Testis (tissue), 5 donors: ENCODE measurements at regions of chr5 and their contacts with region 1.

Region 1: GRCh38 chr5:38441453-38442246 is 114.8 kb downstream of the LIFR start:
- DNase-seq: peak; percentile 96
- H3K4me3 ChIP-seq: no peak overlapping the region
- H3K27ac ChIP-seq: no peak overlapping the region
- H3K4me1 ChIP-seq: no peaks in the 10 kb centered on the region
- H3K27me3 ChIP-seq: no peaks in the 10 kb centered on the region
- CTCF ChIP-seq: peak; percentile 91 to 96 (median 96)
- POLR2A ChIP-seq: no peak

Region 2: DNA sequence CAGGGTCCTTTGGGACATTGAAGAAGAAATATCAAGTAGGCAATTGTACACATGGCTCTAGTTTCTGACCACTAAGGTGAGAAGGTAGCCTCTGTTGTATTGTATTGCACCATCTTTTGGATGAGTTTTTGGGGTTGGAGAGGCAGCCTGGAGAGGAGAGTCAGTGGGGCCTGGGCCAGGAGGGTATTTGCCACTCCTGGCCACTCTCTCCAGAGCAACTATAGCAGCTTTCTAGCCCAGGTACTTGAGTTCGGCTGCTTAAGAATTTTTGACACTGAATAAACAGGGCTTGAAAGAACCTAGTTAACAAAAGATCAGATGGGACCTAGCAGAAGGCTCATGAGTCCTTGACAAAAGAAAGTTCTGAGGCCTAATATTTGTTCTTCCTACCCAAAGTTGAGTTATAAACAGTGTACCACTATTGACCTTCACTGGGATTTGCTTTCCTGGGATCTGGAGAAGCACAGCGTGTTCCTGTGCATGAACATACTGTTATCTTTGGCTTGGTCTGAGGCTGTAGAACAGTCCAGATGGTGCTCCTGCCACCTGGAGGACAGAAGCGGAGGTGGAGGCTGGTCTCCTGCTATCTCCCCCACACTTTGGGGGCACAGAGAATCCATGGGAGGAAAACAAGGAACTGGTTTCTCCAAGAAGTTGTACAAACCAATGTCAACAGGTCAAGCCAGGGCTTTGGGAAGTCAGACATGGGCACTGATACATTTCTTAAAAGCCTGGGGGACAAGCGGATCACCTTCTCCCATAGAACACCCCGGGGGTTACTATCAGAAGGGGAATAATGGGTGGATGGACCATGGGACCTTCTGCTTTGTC is 225.2 kb after region 1 on chr5:
- intact Hi-C with region 1: loop called (anchors 10 kb)
- DNase-seq: peak; percentile 80
- H3K4me3 ChIP-seq: no peak overlapping the region
- H3K27ac ChIP-seq: peak overlapping the region; percentile 56 to 87
- H3K4me1 ChIP-seq: peaks cover 19% of the 10 kb centered on the region
- H3K27me3 ChIP-seq: no peaks in the 10 kb centered on the region
- CTCF ChIP-seq: peak; percentile 60 to 78 (median 72)
- POLR2A ChIP-seq: no peak